Activated T-helper 2 cell treated with anti-CD3 and anti-CD28 coated beads, Interferon-gamma antibody, Interleukin-2, Interleukin-4, amounts not matched to agents 10 μg/mL and 5 μg/mL and 100 μg/mL, durations not matched to agents 14 hours and 24 hours and 36 hours (primary cell): ENCODE measurements at regions of chr2 and their contacts with region 1.

Region 1: DNA sequence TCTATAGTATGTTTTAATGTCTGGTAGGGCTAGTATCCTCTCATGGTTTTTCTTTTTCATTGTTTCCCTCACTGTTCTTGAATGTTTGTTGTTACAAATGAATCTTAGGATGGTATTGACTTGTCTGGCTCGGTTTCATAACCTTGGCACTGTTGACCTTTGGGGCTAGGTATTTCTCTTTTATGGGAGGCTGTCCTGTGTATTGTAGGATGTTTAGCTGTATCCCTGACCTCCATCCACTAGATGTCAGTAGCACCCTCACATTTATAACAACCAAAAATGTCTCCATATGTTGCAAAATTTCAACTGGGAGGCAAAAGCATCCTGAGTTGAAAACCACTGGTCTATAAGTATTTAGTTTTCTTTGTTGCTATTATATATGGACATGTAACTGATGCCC is 7.0 kb upstream of the AOX1 start:
- DNase-seq: no peak
- H3K4me3 Mint-ChIP-seq: no peak overlapping the region
- H3K27ac Mint-ChIP-seq: no peak overlapping the region
- H3K4me1 Mint-ChIP-seq: peaks cover 20% of the 10 kb centered on the region
- H3K27me3 Mint-ChIP-seq: no peaks in the 10 kb centered on the region

Region 2: DNA sequence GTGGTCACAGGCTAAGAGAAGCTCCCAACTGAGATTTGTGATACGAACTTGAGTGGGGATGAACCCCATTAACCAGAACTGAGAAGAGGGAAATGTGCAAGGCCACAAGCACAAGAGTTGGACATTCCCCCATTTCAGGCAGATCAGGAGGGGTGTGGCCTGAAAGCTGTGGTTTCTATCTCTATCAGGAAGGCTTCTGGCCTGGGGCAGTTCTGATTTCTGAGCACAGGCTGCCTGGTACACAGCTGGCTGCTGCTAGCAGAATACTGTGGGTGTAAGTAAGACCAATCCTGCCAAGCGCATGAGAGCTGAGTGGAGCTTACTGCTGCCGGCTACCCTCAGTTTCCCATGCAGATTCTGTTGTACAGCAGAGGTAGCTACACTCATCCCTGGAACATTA is 1605.6 kb before region 1 on chr2:
- intact Hi-C with region 1: no loop called
- DNase-seq: no peak
- H3K4me3 Mint-ChIP-seq: no peak overlapping the region
- H3K27ac Mint-ChIP-seq: no peak overlapping the region
- H3K4me1 Mint-ChIP-seq: no peaks in the 10 kb centered on the region
- H3K27me3 Mint-ChIP-seq: no peaks in the 10 kb centered on the region

Region 3: GRCh38 chr2:200086911-200087310 is 491.9 kb before region 1 on chr2:
- intact Hi-C with region 1: no loop called
- DNase-seq: no peak
- H3K4me3 Mint-ChIP-seq: no peak overlapping the region
- H3K27ac Mint-ChIP-seq: no peak overlapping the region
- H3K4me1 Mint-ChIP-seq: no peaks in the 10 kb centered on the region
- H3K27me3 Mint-ChIP-seq: no peaks in the 10 kb centered on the region

Region 4: GRCh38 chr2:200279857-200280256 is 298.9 kb before region 1 on chr2:
- intact Hi-C with region 1: no loop called
- DNase-seq: no peak
- H3K4me3 Mint-ChIP-seq: no peak overlapping the region
- H3K27ac Mint-ChIP-seq: no peak overlapping the region
- H3K4me1 Mint-ChIP-seq: no peaks in the 10 kb centered on the region
- H3K27me3 Mint-ChIP-seq: peaks cover 46% of the 10 kb centered on the region

Region 5: GRCh38 chr2:200735061-200735460 is 156.3 kb after region 1 on chr2:
- intact Hi-C with region 1: loop called (anchors 1 kb)
- DNase-seq: no peak
- H3K4me3 Mint-ChIP-seq: no peak overlapping the region
- H3K27ac Mint-ChIP-seq: no peak overlapping the region
- H3K4me1 Mint-ChIP-seq: peaks cover 20% of the 10 kb centered on the region
- H3K27me3 Mint-ChIP-seq: peaks cover 7% of the 10 kb centered on the region

Region 6: GRCh38 chr2:200864176-200864976 is 285.6 kb after region 1 on chr2 and contains the start of gene CLK1:
- intact Hi-C with region 1: loop called (anchors 5 kb)
- DNase-seq: peak; percentile 91
- H3K4me3 Mint-ChIP-seq: peak within 1 kb of the TSS; percentile 93
- H3K27ac Mint-ChIP-seq: peak within 1 kb of the TSS; percentile 94
- H3K4me1 Mint-ChIP-seq: peaks cover 32% of the 10 kb centered on the region
- H3K27me3 Mint-ChIP-seq: no peaks in the 10 kb centered on the region
- total RNA-seq, gene CLK1: 114 and 122 TPM in 2 replicates

Region 7: DNA sequence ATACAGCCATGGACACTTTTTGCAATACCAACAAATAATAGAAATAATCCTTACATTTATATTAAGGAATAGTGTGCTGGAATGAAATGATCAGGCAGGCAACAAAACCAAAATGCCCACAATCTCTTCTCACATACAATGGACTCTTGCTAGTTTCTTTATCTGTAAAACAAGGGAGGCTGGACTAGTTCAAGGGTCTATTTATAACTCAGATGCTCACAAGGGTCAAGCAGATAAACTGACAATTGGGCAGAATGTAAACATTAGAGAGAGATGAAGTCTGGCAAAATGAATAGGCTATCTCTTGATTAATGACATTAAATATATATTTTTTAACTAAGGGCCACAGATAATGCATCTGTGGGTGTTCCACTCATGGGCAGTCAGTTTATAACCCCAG is 298.7 kb after region 1 on chr2:
- intact Hi-C with region 1: no loop called
- DNase-seq: no peak
- H3K4me3 Mint-ChIP-seq: no peak overlapping the region
- H3K27ac Mint-ChIP-seq: no peak overlapping the region
- H3K4me1 Mint-ChIP-seq: peaks cover 3% of the 10 kb centered on the region
- H3K27me3 Mint-ChIP-seq: no peaks in the 10 kb centered on the region